G401 (cell line): ENCODE measurements at regions of chr3 and their contacts with region 1.

Region 1: DNA sequence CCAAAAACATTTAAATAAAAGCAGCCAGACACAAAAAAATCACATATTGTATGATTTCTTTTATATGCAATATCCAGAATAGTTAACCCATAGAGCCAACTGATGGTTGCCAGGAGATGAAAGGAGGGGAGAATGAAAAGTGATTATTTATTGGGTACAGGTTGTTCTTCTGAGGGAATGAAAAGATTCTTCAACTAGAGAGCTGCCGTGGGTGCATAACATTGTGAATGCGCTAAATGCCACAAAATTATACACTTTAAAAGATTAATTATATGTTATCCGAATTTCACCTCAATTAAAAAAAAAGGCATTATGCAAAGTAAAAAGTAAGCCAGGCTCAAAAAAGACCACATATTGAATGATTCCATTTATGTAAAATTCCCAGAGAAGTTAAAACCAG is 36.1 kb downstream of the PRKAR2A start:
- DNase-seq: no peak

Region 2: GRCh38 chr3:48776854-48777253 is 34.7 kb before region 1 on chr3:
- in situ Hi-C with region 1: loop called (anchors 5 kb)
- DNase-seq: no peak

Region 3: GRCh38 chr3:49238274-49239127 is 427.0 kb after region 1 on chr3:
- in situ Hi-C with region 1: no loop called
- DNase-seq: no peak